ENCODE measurements at regions of chr11 and their contacts with region 1.

Region 1: GRCh38 chr11:66677599-66678375 is at the start of gene RBM4B:
- DNase-seq: peak; percentile 84
- ATAC-seq: peak; percentile 96
- H3K4me3 ChIP-seq: peak within 1 kb of the TSS; percentile 75
- H3K27ac ChIP-seq: peak within 1 kb of the TSS; percentile 89
- H3K4me1 ChIP-seq: peaks cover 9% of the 10 kb centered on the region
- H3K27me3 ChIP-seq: no peaks in the 10 kb centered on the region
- CTCF ChIP-seq: no peak
- EP300 ChIP-seq: no peak
- POLR2A ChIP-seq: peak; percentile 92
- RAD21 ChIP-seq: 0 out of 2 replicates have a peak, but pooled peaks have one; percentile 2
- polyA plus RNA-seq, gene RBM4B: 17.2 to 23.8 TPM

Region 2: DNA sequence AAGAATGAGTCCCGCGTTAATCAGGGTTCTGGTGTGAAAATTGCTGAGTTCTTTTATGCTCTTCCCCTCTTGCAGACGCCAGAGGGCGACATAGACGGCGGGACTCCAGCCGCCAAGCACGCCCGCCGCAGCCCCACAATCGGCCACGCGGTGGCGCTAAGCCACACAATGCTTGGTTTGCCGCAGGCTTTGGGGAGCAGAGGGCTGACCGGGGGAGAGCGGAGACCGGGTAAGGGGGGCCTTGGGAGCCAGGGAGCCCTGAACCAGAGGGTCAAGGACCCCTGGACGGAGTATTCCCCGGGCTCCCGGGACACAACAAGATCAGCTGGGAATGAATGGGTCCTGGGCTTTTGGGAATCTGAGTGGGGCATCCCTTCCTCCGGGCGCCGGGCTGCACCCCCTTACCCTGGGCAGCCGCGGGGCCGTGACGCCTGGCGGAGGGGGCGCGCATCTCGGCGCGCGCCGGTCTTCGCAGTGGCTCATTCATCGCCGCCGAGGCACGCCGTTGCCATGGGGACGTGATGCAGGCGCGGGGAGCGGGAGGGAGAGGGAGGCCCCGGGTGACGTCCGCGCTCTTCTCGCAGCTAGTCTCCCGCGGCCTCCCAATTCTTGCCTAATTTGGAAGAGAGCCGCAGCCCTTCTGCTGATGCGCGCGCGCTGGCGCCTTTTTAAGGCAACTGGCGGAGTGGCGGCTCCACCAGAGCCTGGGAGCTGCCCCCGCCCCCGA is 269.1 kb before region 1 on chr11:
- CTCF ChIA-PET with region 1: interaction called, 25 read pairs
- POLR2A ChIA-PET with region 1: interaction called, 3 read pairs
- RAD21 ChIA-PET with region 1: interaction called, 17 read pairs
- SMC1A ChIA-PET with region 1: interaction called, 7 read pairs
- in situ Hi-C with region 1: loop called (anchors 5 kb)
- intact Hi-C with region 1: loop called (anchors 1 kb)
- DNase-seq: peak; percentile 36
- ATAC-seq: peak; percentile 93
- H3K4me3 ChIP-seq: no peak overlapping the region
- H3K27ac ChIP-seq: no peak overlapping the region
- H3K4me1 ChIP-seq: no peaks in the 10 kb centered on the region
- H3K27me3 ChIP-seq: peaks cover 0 to 8% of the 10 kb centered on the region in 2 experiments; a peak in 2 of 4 replicates
- CTCF ChIP-seq: peak; percentile 99 to 100 (median 99)
- EP300 ChIP-seq: no peak
- POLR2A ChIP-seq: no peak
- RAD21 ChIP-seq: peak; percentile 86

Region 3: GRCh38 chr11:66438504-66439466 is 239.0 kb before region 1 on chr11 and contains the start of gene MRPL11:
- CTCF ChIA-PET with region 1: interaction called, 20 read pairs
- POLR2A ChIA-PET with region 1: interaction called, 6 read pairs
- RAD21 ChIA-PET with region 1: interaction called, 13 read pairs
- SMC1A ChIA-PET with region 1: interaction called, 6 read pairs
- in situ Hi-C with region 1: no loop called
- intact Hi-C with region 1: loop called (anchors 10 kb)
- DNase-seq: peak; percentile 95
- ATAC-seq: peak; percentile 99
- H3K4me3 ChIP-seq: peak within 1 kb of the TSS; percentile 98
- H3K27ac ChIP-seq: peak within 1 kb of the TSS; percentile 85
- H3K4me1 ChIP-seq: no peaks in the 10 kb centered on the region
- H3K27me3 ChIP-seq: no peaks in the 10 kb centered on the region; a peak in 1 of 4 replicates
- CTCF ChIP-seq: peak; percentile 66 to 91 (median 87)
- EP300 ChIP-seq: no peak
- POLR2A ChIP-seq: peak; percentile 82
- RAD21 ChIP-seq: peak; percentile 37; the same call in 1 of the 2 replicates
- polyA plus RNA-seq, gene MRPL11: 43.5 to 80.9 TPM

Region 4: GRCh38 chr11:66545701-66546367 is 132.0 kb before region 1 on chr11 and contains the start of gene ZDHHC24:
- CTCF ChIA-PET with region 1: interaction called, 32 read pairs
- POLR2A ChIA-PET with region 1: interaction called, 26 read pairs
- RAD21 ChIA-PET with region 1: interaction called, 37 read pairs
- SMC1A ChIA-PET with region 1: interaction called, 37 read pairs
- in situ Hi-C with region 1: no loop called
- intact Hi-C with region 1: loop called (anchors 1 kb)
- DNase-seq: peak; percentile 81
- ATAC-seq: peak; percentile 91
- H3K4me3 ChIP-seq: peak within 1 kb of the TSS; percentile 86
- H3K27ac ChIP-seq: peak within 1 kb of the TSS; percentile 72
- H3K4me1 ChIP-seq: peaks cover 10% of the 10 kb centered on the region
- H3K27me3 ChIP-seq: no peaks in the 10 kb centered on the region
- CTCF ChIP-seq: no peak
- EP300 ChIP-seq: no peak
- POLR2A ChIP-seq: peak; percentile 94
- RAD21 ChIP-seq: no peak
- polyA plus RNA-seq, gene ZDHHC24: 0.86 to 0.89 TPM

Region 5: GRCh38 chr11:66579017-66579606 is 98.7 kb before region 1 on chr11:
- CTCF ChIA-PET with region 1: interaction called, 166 read pairs
- POLR2A ChIA-PET with region 1: interaction called, 7 read pairs
- RAD21 ChIA-PET with region 1: interaction called, 74 read pairs
- SMC1A ChIA-PET with region 1: interaction called, 74 read pairs
- in situ Hi-C with region 1: no loop called
- intact Hi-C with region 1: loop called (anchors 1 kb)
- DNase-seq: no peak
- ATAC-seq: peak; percentile 91
- H3K4me3 ChIP-seq: no peak overlapping the region
- H3K27ac ChIP-seq: no peak overlapping the region
- H3K4me1 ChIP-seq: no peaks in the 10 kb centered on the region; the same call in 1 of the 2 replicates
- H3K27me3 ChIP-seq: no peaks in the 10 kb centered on the region
- CTCF ChIP-seq: peak; percentile 77 to 78 (median 77)
- EP300 ChIP-seq: no peak
- POLR2A ChIP-seq: no peak
- RAD21 ChIP-seq: peak; percentile 69

Region 6: GRCh38 chr11:66616379-66617154 is 61.2 kb before region 1 on chr11 and contains the start of gene RBM14:
- CTCF ChIA-PET with region 1: interaction called, 13 read pairs
- POLR2A ChIA-PET with region 1: interaction called, 22 read pairs
- RAD21 ChIA-PET with region 1: interaction called, 20 read pairs
- SMC1A ChIA-PET with region 1: interaction called, 28 read pairs
- in situ Hi-C with region 1: no loop called
- intact Hi-C with region 1: loop called (anchors 2 kb)
- DNase-seq: peak; percentile 97
- ATAC-seq: peak; percentile 95
- H3K4me3 ChIP-seq: peak within 1 kb of the TSS; percentile 90
- H3K27ac ChIP-seq: peak within 1 kb of the TSS; percentile 93
- H3K4me1 ChIP-seq: peaks cover 5% of the 10 kb centered on the region; the same call in 1 of the 2 replicates
- H3K27me3 ChIP-seq: no peaks in the 10 kb centered on the region
- CTCF ChIP-seq: no peak
- EP300 ChIP-seq: peak in 1 of 2 experiments; percentile 28; a peak in 1 of 4 replicates
- POLR2A ChIP-seq: peak; percentile 100
- RAD21 ChIP-seq: no peak
- polyA plus RNA-seq, gene RBM14: 5.4 to 16.1 TPM

Region 7: GRCh38 chr11:66659763-66660162 is 18.0 kb before region 1 on chr11:
- CTCF ChIA-PET with region 1: interaction called, 11 read pairs
- POLR2A ChIA-PET with region 1: interaction called, 12 read pairs
- RAD21 ChIA-PET with region 1: interaction called, 8 read pairs
- SMC1A ChIA-PET with region 1: interaction called, 12 read pairs
- in situ Hi-C with region 1: no loop called
- intact Hi-C with region 1: no loop called
- DNase-seq: no peak
- ATAC-seq: peak; percentile 36
- H3K4me3 ChIP-seq: no peak overlapping the region
- H3K27ac ChIP-seq: no peak overlapping the region
- H3K4me1 ChIP-seq: peaks cover 8% of the 10 kb centered on the region; the same call in 1 of the 2 replicates
- H3K27me3 ChIP-seq: no peaks in the 10 kb centered on the region
- CTCF ChIP-seq: no peak
- EP300 ChIP-seq: no peak
- POLR2A ChIP-seq: no peak
- RAD21 ChIP-seq: no peak